Activated naive CD4-positive, alpha-beta T cell treated with anti-CD3 and anti-CD28 coated beads for 36 hours (primary cell): ENCODE measurements at regions of chr10 and their contacts with region 1.

Region 1: DNA sequence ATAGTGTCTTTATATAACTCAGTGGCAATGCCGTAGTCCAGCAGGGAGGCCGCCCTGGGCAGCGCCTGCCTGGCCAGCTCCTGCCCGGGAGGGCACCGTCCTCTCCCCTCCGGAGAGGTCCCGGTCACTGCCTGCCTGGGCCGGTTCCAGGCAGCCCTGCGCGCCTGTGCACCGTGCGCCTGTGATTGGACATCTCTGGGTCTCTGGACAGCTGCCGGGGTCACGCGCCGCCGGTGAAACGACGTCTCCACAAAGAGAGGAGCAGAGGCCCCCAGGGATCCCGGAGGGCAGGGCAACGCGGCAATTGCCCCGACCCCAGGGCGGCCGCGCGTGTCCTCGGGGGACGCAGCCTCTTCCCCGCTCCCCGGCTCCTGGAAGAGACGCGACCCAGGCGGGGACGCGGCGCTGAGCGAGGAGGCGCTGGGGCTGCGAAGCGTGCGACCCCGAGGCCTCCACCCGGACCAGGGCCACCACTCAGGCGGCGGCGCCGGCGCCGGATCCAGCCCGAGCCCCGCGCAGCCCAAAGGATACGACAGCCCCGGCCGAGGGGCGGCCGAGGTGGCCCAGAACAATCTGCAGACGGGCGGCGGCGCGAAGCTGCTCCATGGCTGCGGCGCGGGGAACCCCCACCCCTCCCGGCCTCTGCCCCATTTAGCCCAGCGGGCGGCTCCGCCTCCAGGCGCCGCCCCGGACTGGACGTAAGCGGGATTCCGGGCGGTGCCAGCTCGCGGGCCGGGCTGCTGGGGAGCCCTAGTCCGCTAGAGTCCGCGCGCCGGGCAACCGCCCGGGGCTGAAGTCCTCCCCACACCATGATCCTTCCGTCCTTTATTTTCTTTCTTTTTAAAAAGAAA is at the start of gene PHYH:
- DNase-seq: peak; percentile 78
- H3K4me3 Mint-ChIP-seq: peak within 1 kb of the TSS; percentile 76
- H3K27ac Mint-ChIP-seq: peak within 1 kb of the TSS; percentile 83
- H3K4me1 Mint-ChIP-seq: peaks cover 24% of the 10 kb centered on the region
- H3K27me3 Mint-ChIP-seq: no peaks in the 10 kb centered on the region
- total RNA-seq, gene PHYH: 13.3 to 14.2 TPM

Region 2: DNA sequence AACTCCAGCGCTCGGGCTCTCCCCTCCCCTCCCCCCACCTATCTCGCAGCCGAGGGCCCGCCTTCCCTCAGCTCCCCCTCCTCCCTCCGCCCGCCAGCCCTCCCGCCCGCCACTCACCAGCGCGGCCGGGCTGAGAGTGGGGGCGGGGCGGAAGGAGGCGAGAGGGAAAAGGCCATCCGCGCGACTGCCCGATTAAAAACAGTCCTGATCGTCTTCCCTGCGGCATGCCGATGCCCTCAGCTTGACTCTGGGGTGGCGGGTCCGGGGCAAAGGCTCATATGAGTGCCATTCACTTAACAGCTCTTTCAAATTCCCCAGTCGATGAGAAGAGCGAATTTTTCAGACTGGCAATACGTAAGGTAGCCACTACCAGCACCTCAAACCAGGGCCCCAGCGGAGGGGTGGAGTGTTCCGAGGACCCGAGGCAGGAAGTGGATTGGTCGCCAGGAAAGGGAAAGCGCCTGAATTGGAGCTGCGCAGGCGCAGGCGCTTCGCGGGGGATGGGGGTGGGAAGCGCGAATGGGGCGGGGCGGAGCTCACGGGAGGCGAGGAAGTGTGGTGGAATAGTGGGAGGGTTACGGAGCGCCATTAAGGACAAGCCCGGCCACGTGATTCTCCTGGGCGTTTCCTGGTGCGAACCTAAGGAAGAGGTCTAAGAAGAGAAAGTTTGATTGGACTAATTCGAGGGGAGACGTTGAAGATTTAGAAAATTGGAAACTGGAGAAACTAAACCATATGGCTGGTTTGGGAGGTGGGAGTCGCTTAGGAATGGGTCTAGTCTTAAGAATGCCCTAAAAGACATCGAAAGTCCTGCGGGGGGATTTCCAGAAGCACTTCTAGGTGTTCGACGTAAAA is 1256.6 kb before region 1 on chr10 and contains the start of gene UPF2:
- CTCF ChIA-PET with region 1: no interaction called
- intact Hi-C with region 1: loop called (anchors 5 kb)
- DNase-seq: peak; percentile 98
- H3K4me3 Mint-ChIP-seq: peak within 1 kb of the TSS; percentile 98
- H3K27ac Mint-ChIP-seq: peak within 1 kb of the TSS; percentile 99
- H3K4me1 Mint-ChIP-seq: peaks cover 33% of the 10 kb centered on the region
- H3K27me3 Mint-ChIP-seq: no peaks in the 10 kb centered on the region
- total RNA-seq, gene UPF2: 27.5 to 29.5 TPM

Region 3: GRCh38 chr10:13160934-13161856 is 138.5 kb before region 1 on chr10 and contains the start of gene MCM10:
- CTCF ChIA-PET with region 1: interaction called, 53 read pairs
- intact Hi-C with region 1: loop called (anchors 1 kb)
- DNase-seq: peak; percentile 99
- H3K4me3 Mint-ChIP-seq: peak within 1 kb of the TSS; percentile 88
- H3K27ac Mint-ChIP-seq: peak within 1 kb of the TSS; percentile 63
- H3K4me1 Mint-ChIP-seq: peaks cover 27% of the 10 kb centered on the region
- H3K27me3 Mint-ChIP-seq: peaks cover 2% of the 10 kb centered on the region
- total RNA-seq, gene MCM10: 76.9 to 81.1 TPM

Region 4: DNA sequence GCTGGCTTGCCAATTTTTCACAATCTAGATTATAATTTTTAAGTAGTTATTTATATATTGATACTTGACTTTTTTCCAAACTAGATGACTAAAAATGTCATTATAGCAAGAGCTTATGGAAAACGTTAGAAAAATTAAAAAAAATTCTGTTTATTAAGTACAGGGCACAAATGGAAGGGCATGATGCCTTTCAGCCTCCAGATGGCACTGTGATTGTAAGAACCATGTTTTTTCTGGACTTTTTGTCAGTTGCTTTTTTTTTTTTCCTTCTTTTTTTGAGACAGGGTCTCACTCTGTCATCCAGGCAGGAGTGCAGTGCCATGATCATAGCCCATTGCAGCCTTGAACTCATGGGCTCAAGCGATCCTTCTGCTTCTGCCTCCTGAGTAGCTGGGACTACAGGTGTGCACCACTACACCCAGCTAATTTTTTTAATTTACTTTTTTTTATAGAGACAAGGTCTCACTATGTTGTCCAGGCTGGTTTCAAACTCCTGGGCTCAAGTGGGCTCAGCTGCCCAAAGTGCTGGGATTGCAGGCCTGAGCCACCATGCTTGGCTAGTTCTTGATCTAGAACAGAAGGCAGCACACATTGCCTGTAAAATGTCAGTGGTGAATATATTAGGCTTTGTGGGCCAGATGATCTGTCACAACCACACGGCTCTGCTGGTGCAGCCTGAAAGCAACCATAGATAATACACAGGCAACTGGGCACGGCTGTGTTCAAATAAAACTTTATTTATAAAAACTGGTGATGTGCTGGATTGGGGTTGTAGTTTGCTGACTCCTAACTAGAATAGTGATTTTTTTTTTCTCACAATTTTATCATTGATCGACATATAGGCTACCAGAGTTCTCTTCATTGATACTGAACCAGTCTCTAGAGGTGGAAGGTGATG is 92.9 kb before region 1 on chr10:
- CTCF ChIA-PET with region 1: interaction called, 5 read pairs
- intact Hi-C with region 1: loop called (anchors 1 kb)
- DNase-seq: no peak
- H3K4me3 Mint-ChIP-seq: no peak overlapping the region
- H3K27ac Mint-ChIP-seq: no peak overlapping the region
- H3K4me1 Mint-ChIP-seq: no peaks in the 10 kb centered on the region
- H3K27me3 Mint-ChIP-seq: no peaks in the 10 kb centered on the region

Region 5: GRCh38 chr10:13257621-13258140 is 42.0 kb before region 1 on chr10:
- CTCF ChIA-PET with region 1: no interaction called
- intact Hi-C with region 1: no loop called
- DNase-seq: no peak
- H3K4me3 Mint-ChIP-seq: no peak overlapping the region
- H3K27ac Mint-ChIP-seq: no peak overlapping the region
- H3K4me1 Mint-ChIP-seq: peaks cover 4% of the 10 kb centered on the region
- H3K27me3 Mint-ChIP-seq: no peaks in the 10 kb centered on the region

Region 6: GRCh38 chr10:13271552-13272163 is 28.0 kb before region 1 on chr10:
- CTCF ChIA-PET with region 1: interaction called, 5 read pairs
- intact Hi-C with region 1: loop called (anchors 1 kb)
- DNase-seq: peak; percentile 61
- H3K4me3 Mint-ChIP-seq: no peak overlapping the region
- H3K27ac Mint-ChIP-seq: no peak overlapping the region
- H3K4me1 Mint-ChIP-seq: peaks cover 4% of the 10 kb centered on the region
- H3K27me3 Mint-ChIP-seq: no peaks in the 10 kb centered on the region

Region 7: DNA sequence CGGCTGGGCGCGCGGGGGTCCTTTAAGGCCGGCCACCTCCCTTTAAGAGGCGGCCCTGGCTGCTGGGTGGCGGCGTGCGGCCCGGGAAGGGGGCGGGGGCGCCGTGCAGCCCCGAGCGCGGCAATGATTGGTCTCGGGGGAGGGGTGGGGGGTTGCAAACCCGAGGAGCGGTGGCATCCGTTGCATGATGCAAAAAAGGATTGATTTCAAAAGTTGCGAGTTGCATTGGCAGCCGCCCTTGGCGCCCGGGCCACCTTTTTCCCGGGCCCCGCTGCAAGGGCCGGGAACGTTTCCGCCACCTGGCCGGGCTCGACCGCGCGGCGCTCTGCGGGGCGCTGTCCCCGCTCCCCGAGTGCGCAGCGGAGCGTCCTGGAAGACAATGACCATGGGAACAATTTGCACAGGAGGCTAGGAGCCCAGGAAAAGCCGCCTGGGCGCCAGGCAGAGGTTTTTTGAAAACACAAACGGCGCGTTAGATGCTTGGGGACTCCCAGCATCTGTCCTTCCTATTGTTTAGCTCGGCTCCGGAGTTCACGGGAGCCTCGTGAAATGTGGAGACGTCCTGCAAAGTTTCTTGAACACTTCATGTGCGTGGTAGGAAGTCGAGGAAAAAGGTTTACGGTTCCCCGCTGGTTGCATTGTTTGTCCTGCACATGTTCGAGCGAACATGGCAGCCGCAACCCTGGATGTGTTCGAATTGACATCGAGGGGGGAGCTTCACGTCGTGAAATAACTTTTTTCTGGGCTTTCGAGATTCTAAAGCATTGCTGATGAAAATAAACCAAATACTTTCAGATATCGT is 48.8 kb after region 1 on chr10 and contains the start of gene SEPHS1:
- CTCF ChIA-PET with region 1: interaction called, 6 read pairs
- intact Hi-C with region 1: loop called (anchors 1 kb)
- DNase-seq: peak; percentile 91
- H3K4me3 Mint-ChIP-seq: peak within 1 kb of the TSS; percentile 88
- H3K27ac Mint-ChIP-seq: peak within 1 kb of the TSS; percentile 94
- H3K4me1 Mint-ChIP-seq: peaks cover 57% of the 10 kb centered on the region
- H3K27me3 Mint-ChIP-seq: no peaks in the 10 kb centered on the region
- total RNA-seq, gene SEPHS1: 75.6 to 79.6 TPM

Region 8: GRCh38 chr10:13365243-13365642 is 65.6 kb after region 1 on chr10:
- CTCF ChIA-PET with region 1: no interaction called
- intact Hi-C with region 1: no loop called
- DNase-seq: no peak
- H3K4me3 Mint-ChIP-seq: no peak overlapping the region
- H3K27ac Mint-ChIP-seq: no peak overlapping the region
- H3K4me1 Mint-ChIP-seq: no peaks in the 10 kb centered on the region
- H3K27me3 Mint-ChIP-seq: no peaks in the 10 kb centered on the region

Region 9: DNA sequence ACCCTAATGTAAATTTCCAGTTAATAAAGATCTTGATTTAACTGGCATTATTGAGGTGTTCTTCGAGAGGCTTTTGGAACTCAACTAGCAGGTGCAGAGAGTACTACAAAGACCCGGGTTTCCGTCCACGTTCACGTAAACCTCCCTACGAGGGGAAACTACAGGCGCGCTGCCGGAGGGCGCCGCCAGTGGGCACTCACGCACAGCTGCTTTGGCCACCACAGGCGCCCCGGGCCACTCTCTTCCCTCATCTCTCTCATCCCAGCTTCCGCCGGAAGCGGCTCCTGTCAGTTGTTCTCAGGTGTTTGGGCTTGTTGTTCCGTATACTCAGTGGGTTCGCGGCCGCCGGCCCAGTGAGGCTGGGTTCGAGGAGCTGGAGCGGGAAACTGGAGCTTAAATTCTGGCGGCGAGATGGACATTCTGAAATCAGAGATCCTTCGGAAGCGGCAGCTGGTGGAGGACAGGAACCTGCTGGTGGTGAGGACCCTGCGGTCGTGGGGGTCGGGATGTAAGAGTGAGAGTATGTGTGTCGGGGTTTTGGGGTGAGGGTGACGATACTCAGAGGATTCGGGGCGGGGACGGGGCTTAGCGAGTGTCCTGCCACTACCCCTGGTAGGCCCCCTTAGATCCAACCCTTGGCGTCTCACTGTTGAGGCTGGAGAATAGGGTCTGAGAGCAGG is 287.2 kb after region 1 on chr10 and contains the start of gene PRPF18:
- CTCF ChIA-PET with region 1: no interaction called
- intact Hi-C with region 1: loop called (anchors 1 kb)
- DNase-seq: peak; percentile 96
- H3K4me3 Mint-ChIP-seq: peak within 1 kb of the TSS; percentile 99
- H3K27ac Mint-ChIP-seq: peak within 1 kb of the TSS; percentile 87
- H3K4me1 Mint-ChIP-seq: peaks cover 27% of the 10 kb centered on the region
- H3K27me3 Mint-ChIP-seq: peaks cover 2% of the 10 kb centered on the region
- total RNA-seq, gene PRPF18: 20.2 to 20.8 TPM